Psoas muscle (tissue), 8 donors: ENCODE measurements at regions of chr15 and their contacts with region 1.

Region 1: GRCh38 chr15:67967871-67968431 is 86.2 kb upstream of the PIAS1 start:
- DNase-seq: peak; percentile 75 to 82
- ATAC-seq: peak in 3 of 4 donors; percentile 62 to 85 (median 70)
- H3K4me3 ChIP-seq: peak overlapping the region; percentile 49
- H3K27ac ChIP-seq: no peak overlapping the region
- H3K4me1 ChIP-seq: no peaks in the 10 kb centered on the region
- H3K27me3 ChIP-seq: no peaks in the 10 kb centered on the region
- CTCF ChIP-seq: no peak

Region 2: DNA sequence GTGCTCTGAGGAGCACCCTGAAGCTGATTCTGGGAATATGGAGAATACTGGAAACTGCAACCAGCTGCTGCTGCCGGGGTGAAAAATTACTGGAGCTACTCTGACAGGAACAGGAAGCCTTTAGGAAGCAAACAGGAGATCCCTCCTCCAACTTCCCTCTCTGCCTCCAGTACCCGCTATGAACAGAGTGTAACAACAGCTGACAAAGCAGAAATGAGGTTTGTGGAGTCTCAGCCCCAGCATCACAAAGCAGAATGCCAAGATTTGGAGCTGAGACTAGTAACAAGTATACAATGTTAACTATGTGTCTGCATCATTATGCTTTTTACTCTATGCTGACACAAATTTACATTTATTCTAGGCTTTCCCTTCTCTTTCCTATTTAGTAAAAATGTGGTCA is 63.5 kb after region 1 on chr15:
- intact Hi-C with region 1: loop called in 1 of 2 experiments (anchors 10 kb)
- DNase-seq: no peak
- ATAC-seq: no peak
- H3K4me3 ChIP-seq: no peak overlapping the region
- H3K27ac ChIP-seq: no peak overlapping the region
- H3K4me1 ChIP-seq: no peaks in the 10 kb centered on the region
- H3K27me3 ChIP-seq: no peaks in the 10 kb centered on the region
- CTCF ChIP-seq: no peak